ENCODE measurements at regions of chr6 and their contacts with region 1.

Region 1: GRCh38 chr6:17803409-17803808 is 96.7 kb upstream of the NUP153 start:
- DNase-seq: no peak
- ATAC-seq: no peak
- H3K4me3 Mint-ChIP-seq: no peak overlapping the region
- H3K27ac Mint-ChIP-seq: no peak overlapping the region
- H3K4me1 Mint-ChIP-seq: no peaks in the 10 kb centered on the region
- H3K27me3 Mint-ChIP-seq: no peaks in the 10 kb centered on the region
- CTCF ChIP-seq: no peak

Region 2: GRCh38 chr6:17066610-17067009 is 736.8 kb before region 1 on chr6:
- CTCF ChIA-PET with region 1: no interaction called
- POLR2A ChIA-PET with region 1: no interaction called
- intact Hi-C with region 1: no loop called
- DNase-seq: no peak
- ATAC-seq: no peak
- H3K4me3 Mint-ChIP-seq: no peak overlapping the region
- H3K27ac Mint-ChIP-seq: no peak overlapping the region
- H3K4me1 Mint-ChIP-seq: no peaks in the 10 kb centered on the region
- H3K27me3 Mint-ChIP-seq: peaks cover 2% of the 10 kb centered on the region
- CTCF ChIP-seq: no peak

Region 3: GRCh38 chr6:17584241-17584803 is 219.1 kb before region 1 on chr6:
- CTCF ChIA-PET with region 1: interaction called, 18 read pairs
- POLR2A ChIA-PET with region 1: no interaction called
- intact Hi-C with region 1: loop called (anchors 1 kb)
- DNase-seq: no peak
- ATAC-seq: peak; percentile 52
- H3K4me3 Mint-ChIP-seq: no peak overlapping the region
- H3K27ac Mint-ChIP-seq: peak overlapping the region; percentile 19
- H3K4me1 Mint-ChIP-seq: peaks cover 3% of the 10 kb centered on the region
- H3K27me3 Mint-ChIP-seq: peaks cover 2% of the 10 kb centered on the region
- CTCF ChIP-seq: peak; percentile 83

Region 4: DNA sequence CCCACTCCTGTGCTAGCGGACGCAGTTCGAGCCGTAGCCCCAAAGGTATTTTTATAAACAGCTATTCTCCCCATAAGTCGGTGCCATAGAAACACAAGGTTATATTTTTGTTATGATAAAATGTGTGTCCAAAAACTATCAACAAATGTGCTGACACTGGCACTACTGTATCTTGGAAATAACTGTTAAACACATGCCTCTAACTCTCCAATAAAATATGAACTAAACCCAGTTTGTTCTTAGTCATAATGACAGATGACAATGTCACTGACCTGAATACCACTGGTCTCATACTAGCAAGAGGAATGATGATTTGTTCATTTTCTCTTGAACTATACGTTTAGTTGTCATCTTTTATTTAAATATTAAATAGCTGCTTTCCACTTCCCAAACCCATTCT is 45.3 kb before region 1 on chr6:
- CTCF ChIA-PET with region 1: no interaction called
- POLR2A ChIA-PET with region 1: no interaction called
- intact Hi-C with region 1: no loop called
- DNase-seq: no peak
- ATAC-seq: no peak
- H3K4me3 Mint-ChIP-seq: no peak overlapping the region
- H3K27ac Mint-ChIP-seq: no peak overlapping the region
- H3K4me1 Mint-ChIP-seq: no peaks in the 10 kb centered on the region
- H3K27me3 Mint-ChIP-seq: no peaks in the 10 kb centered on the region
- CTCF ChIP-seq: no peak

Measured in activated B cell treated with CpG ODN at 0.5 μM for 24 hours (primary cell).